ENCODE measurements at regions of chr4 and their contacts with region 1.

Region 1: GRCh38 chr4:122732329-122733026 is at the start of gene BBS12:
- DNase-seq: peak; percentile 100
- ATAC-seq: peak; percentile 97
- H3K4me3 ChIP-seq: peak within 1 kb of the TSS; percentile 71 to 97 (median 84)
- H3K4me3 Mint-ChIP-seq: peak within 1 kb of the TSS; percentile 95
- H3K27ac ChIP-seq: peak within 1 kb of the TSS; percentile 87 to 92
- H3K27ac Mint-ChIP-seq: peak within 1 kb of the TSS; percentile 97
- H3K4me1 ChIP-seq: peaks cover 13 to 17% of the 10 kb centered on the region in 2 donors
- H3K4me1 Mint-ChIP-seq: peaks cover 15% of the 10 kb centered on the region
- H3K27me3 ChIP-seq: no peaks in the 10 kb centered on the region
- H3K27me3 Mint-ChIP-seq: no peaks in the 10 kb centered on the region
- CTCF ChIP-seq: no peak
- total RNA-seq, gene BBS12: 2.9 and 3.4 TPM in 2 replicates

Region 2: DNA sequence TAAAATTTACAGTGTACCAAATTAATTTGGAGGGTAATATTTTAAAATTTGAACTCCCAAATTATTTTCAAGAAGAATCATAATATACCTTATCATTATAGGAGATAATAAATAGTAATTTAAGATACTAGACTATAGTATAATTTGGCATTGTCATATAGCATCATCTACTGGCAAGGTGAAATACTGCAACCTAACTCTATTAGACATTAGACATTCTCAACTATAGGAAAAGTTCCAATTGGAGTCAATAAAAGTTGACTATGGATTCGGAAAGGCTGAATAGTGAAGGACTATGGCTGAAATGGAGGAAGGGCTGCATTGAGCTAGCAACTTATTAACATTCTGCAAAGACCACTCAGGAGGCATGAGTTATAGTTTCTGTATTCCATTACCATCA is 1923.0 kb before region 1 on chr4:
- CTCF ChIA-PET with region 1: no interaction called
- POLR2A ChIA-PET with region 1: no interaction called
- intact Hi-C with region 1: no loop called
- DNase-seq: no peak
- ATAC-seq: no peak
- H3K4me3 ChIP-seq: no peak overlapping the region
- H3K4me3 Mint-ChIP-seq: no peak overlapping the region
- H3K27ac ChIP-seq: no peak overlapping the region
- H3K27ac Mint-ChIP-seq: no peak overlapping the region
- H3K4me1 ChIP-seq: no peaks in the 10 kb centered on the region
- H3K4me1 Mint-ChIP-seq: no peaks in the 10 kb centered on the region
- H3K27me3 ChIP-seq: no peaks in the 10 kb centered on the region
- H3K27me3 Mint-ChIP-seq: no peaks in the 10 kb centered on the region
- CTCF ChIP-seq: no peak

Region 3: DNA sequence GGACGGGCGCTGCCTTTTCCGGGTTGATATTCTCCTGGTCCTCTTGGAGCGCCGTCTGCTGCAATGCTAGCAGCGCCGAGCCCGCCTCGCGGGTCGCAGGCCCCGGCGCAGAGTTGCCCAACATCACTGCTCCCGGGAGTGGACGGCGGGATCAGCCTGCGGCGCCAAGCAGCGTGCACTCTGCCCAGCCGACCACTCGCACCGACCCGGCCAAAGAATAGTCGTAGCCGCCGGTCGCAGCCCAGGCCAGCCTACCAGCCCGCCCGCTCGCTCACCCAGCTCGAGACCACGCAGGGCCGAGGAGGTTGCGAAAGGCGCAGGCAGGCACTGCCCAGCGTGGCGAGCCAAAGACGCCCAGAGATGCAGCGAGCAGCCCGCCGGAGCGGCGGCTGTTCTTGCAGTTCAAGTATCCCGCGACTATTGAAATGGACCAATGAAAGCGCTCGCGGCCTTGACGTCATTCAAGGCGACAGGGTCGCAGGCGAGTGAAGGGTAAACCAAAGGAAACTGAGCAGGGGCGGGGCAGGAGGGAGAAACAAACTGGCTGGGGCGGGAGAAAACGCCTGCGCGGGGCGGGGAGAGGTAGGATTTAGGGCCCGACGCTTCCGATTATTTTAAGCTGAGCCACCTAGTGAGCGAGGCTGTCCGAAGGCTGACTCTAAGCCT is 908.8 kb before region 1 on chr4 and contains the start of gene CCNA2:
- CTCF ChIA-PET with region 1: no interaction called
- POLR2A ChIA-PET with region 1: no interaction called
- intact Hi-C with region 1: loop called (anchors 1 kb)
- DNase-seq: peak; percentile 94
- ATAC-seq: peak; percentile 99
- H3K4me3 ChIP-seq: peak within 1 kb of the TSS; percentile 46 to 96 (median 74)
- H3K4me3 Mint-ChIP-seq: peak within 1 kb of the TSS; percentile 90
- H3K27ac ChIP-seq: peak within 1 kb of the TSS; percentile 62 to 82
- H3K27ac Mint-ChIP-seq: peak within 1 kb of the TSS; percentile 87
- H3K4me1 ChIP-seq: peaks cover 8 to 10% of the 10 kb centered on the region in 2 donors
- H3K4me1 Mint-ChIP-seq: peaks cover 16% of the 10 kb centered on the region
- H3K27me3 ChIP-seq: no peaks in the 10 kb centered on the region
- H3K27me3 Mint-ChIP-seq: no peaks in the 10 kb centered on the region
- CTCF ChIP-seq: no peak
- total RNA-seq, gene CCNA2: 0.94 and 1.8 TPM in 2 replicates

Region 4: DNA sequence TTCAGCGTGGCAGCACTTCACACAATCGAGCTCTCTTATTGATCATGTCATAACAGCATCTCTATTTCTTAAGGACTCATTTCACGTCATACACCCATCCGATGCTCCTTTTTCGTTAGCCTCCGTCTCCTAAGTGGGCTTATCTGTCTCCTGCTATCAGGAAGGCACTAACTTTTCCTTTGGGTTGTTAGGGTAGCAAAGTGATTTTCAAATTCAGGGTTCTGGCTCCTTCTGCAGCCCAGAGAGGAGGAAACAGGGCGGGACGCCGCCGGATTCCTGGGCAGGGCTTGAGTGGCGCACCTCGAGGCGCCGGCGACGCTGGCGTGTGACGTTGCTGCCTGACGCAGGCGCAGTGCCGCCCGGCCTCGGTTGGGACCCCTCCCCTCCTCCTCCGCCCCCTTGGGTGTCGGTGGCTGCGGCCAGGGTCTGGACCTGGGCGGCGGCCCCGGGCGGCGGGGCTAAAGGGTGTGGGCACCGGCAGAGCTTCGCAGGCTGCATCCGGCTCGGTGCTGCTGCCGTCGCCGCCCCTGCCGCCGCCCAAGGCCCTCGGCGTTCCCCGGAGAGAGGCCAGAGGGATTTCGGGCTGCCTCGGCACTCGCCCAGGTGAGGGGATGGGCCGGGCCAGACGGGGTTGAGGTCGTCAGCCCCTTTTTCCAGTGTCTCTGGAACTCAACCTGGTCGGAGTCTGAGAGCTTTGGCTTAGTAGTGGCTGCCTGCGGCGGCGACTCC is 580.3 kb before region 1 on chr4 and contains the start of gene BLTP1:
- CTCF ChIA-PET with region 1: no interaction called
- POLR2A ChIA-PET with region 1: no interaction called
- intact Hi-C with region 1: loop called (anchors 1 kb)
- DNase-seq: peak; percentile 91
- ATAC-seq: peak; percentile 96
- H3K4me3 ChIP-seq: peak within 1 kb of the TSS; percentile 73 to 89 (median 86)
- H3K4me3 Mint-ChIP-seq: peak within 1 kb of the TSS; percentile 92
- H3K27ac ChIP-seq: peak within 1 kb of the TSS; percentile 73 to 87
- H3K27ac Mint-ChIP-seq: peak within 1 kb of the TSS; percentile 91
- H3K4me1 ChIP-seq: peaks cover 20 to 25% of the 10 kb centered on the region in 2 donors
- H3K4me1 Mint-ChIP-seq: peaks cover 52% of the 10 kb centered on the region
- H3K27me3 ChIP-seq: no peaks in the 10 kb centered on the region
- H3K27me3 Mint-ChIP-seq: peaks cover 3% of the 10 kb centered on the region
- CTCF ChIP-seq: no peak
- total RNA-seq, gene BLTP1: 86.3 and 96.8 TPM in 2 replicates

Region 5: DNA sequence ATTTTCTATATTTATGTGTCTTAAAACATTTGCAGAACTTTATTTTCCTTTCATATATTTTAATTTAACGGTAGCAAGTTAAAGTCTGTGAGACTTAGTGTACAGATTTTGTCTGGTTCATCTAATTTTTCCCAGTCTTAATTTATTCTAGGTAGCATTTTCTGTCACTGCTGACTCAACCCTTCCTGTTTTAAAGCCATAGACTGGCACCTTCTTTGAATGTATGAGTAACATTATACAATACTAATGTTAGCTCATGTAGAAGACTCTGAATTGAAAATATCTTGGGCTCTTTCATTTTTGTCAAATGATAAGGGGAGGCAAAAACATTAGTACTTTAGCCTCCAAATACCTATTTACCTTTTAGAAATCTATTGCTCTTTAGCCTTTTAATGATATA is 536.8 kb before region 1 on chr4:
- CTCF ChIA-PET with region 1: no interaction called
- POLR2A ChIA-PET with region 1: no interaction called
- intact Hi-C with region 1: no loop called
- DNase-seq: no peak
- ATAC-seq: no peak
- H3K4me3 ChIP-seq: no peak overlapping the region
- H3K4me3 Mint-ChIP-seq: no peak overlapping the region
- H3K27ac ChIP-seq: no peak overlapping the region
- H3K27ac Mint-ChIP-seq: no peak overlapping the region
- H3K4me1 ChIP-seq: no peaks in the 10 kb centered on the region
- H3K4me1 Mint-ChIP-seq: no peaks in the 10 kb centered on the region
- H3K27me3 ChIP-seq: no peaks in the 10 kb centered on the region
- H3K27me3 Mint-ChIP-seq: no peaks in the 10 kb centered on the region
- CTCF ChIP-seq: no peak

Region 6: DNA sequence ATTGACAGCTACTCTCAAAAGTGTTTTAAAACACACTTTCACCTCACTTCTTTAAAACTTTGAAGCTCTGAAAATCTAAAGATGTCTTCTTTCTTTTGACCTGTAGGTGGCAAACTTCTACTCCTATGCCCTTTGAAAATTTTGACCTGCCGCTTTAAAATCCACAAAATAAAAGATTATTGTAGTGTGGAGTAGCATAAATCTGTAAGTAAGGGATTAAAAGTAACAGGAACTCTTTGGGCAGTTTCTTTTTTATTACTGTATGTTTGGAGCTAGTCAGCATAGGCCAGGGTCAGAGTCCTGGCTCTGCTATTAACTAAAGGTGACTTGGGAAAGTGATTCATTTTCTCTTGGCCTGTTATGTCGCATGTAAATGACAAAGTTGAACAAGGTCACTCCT is 25.6 kb after region 1 on chr4:
- CTCF ChIA-PET with region 1: interaction called, 10 read pairs
- POLR2A ChIA-PET with region 1: no interaction called
- intact Hi-C with region 1: no loop called
- DNase-seq: peak; percentile 53
- ATAC-seq: no peak
- H3K4me3 ChIP-seq: no peak overlapping the region
- H3K4me3 Mint-ChIP-seq: no peak overlapping the region
- H3K27ac ChIP-seq: no peak overlapping the region
- H3K27ac Mint-ChIP-seq: no peak overlapping the region
- H3K4me1 ChIP-seq: peaks cover 8 to 11% of the 10 kb centered on the region in 2 donors
- H3K4me1 Mint-ChIP-seq: peaks cover 15% of the 10 kb centered on the region
- H3K27me3 ChIP-seq: no peaks in the 10 kb centered on the region
- H3K27me3 Mint-ChIP-seq: peaks cover 22% of the 10 kb centered on the region
- CTCF ChIP-seq: peak; percentile 96

Region 7: DNA sequence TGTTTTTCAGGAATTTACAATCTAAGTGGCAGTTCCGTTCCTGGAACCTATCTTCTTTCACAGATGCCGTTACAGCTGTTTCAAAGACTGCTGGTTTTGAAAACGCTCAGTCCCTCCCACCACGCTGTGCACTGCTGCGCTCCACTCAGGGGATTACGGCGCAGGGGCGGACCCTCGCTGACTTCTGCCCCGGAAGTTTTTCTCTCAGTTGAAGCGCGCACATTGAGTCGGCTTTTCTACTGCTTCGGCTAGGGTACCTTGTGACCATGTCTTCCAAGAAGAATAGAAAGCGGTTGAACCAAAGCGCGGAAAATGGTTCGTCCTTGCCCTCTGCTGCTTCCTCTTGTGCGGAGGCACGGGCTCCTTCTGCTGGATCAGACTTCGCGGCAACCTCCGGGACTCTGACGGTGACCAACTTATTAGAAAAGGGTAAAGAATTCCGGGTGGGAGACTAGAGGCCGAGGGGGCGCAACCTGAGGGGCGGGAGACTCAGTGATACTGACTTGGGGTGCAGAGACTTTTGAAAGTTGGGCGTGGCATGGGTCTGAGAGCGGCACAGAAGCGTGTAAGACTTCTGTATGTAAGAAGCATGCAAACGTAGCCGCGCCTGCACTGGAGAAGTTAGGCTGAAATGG is 190.5 kb after region 1 on chr4:
- CTCF ChIA-PET with region 1: interaction called, 8 read pairs
- POLR2A ChIA-PET with region 1: interaction called, 4 read pairs
- intact Hi-C with region 1: loop called (anchors 1 kb)
- DNase-seq: peak; percentile 87
- ATAC-seq: peak; percentile 96
- H3K4me3 ChIP-seq: peak overlapping the region; percentile 68 to 92 (median 85)
- H3K4me3 Mint-ChIP-seq: peak overlapping the region; percentile 96
- H3K27ac ChIP-seq: peak overlapping the region; percentile 54 to 76
- H3K27ac Mint-ChIP-seq: peak overlapping the region; percentile 91
- H3K4me1 ChIP-seq: peaks cover 13 to 16% of the 10 kb centered on the region in 2 donors
- H3K4me1 Mint-ChIP-seq: peaks cover 11% of the 10 kb centered on the region
- H3K27me3 ChIP-seq: no peaks in the 10 kb centered on the region
- H3K27me3 Mint-ChIP-seq: no peaks in the 10 kb centered on the region
- CTCF ChIP-seq: no peak

Region 8: GRCh38 chr4:123396307-123397143 is 664.0 kb after region 1 on chr4 and contains the start of gene SPRY1:
- CTCF ChIA-PET with region 1: no interaction called
- POLR2A ChIA-PET with region 1: no interaction called
- intact Hi-C with region 1: loop called (anchors 5 kb)
- DNase-seq: peak; percentile 86
- ATAC-seq: peak; percentile 45
- H3K4me3 ChIP-seq: peak within 1 kb of the TSS; percentile 68 to 88 (median 73)
- H3K4me3 Mint-ChIP-seq: peak within 1 kb of the TSS; percentile 96
- H3K27ac ChIP-seq: peak within 1 kb of the TSS; percentile 61 to 84
- H3K27ac Mint-ChIP-seq: peak within 1 kb of the TSS; percentile 74
- H3K4me1 ChIP-seq: peaks cover 18 to 33% of the 10 kb centered on the region in 2 donors
- H3K4me1 Mint-ChIP-seq: peaks cover 29% of the 10 kb centered on the region
- H3K27me3 ChIP-seq: peaks cover 0 to 8% (median 0%) of the 10 kb centered on the region in 4 experiments
- H3K27me3 Mint-ChIP-seq: peaks cover 21% of the 10 kb centered on the region
- CTCF ChIP-seq: no peak
- total RNA-seq, gene SPRY1: 6.9 and 9.8 TPM in 2 replicates